GM18951 (cell line): ENCODE measurements at regions of chr1 and their contacts with region 1.

Region 1: GRCh38 chr1:212089560-212090163 is 54.1 kb downstream of the DTL start:
- POLR2A ChIP-seq: no peak

Region 2: GRCh38 chr1:212455803-212456528 is 366.3 kb after region 1 on chr1:
- in situ Hi-C with region 1: loop called (anchors 10 kb)
- POLR2A ChIP-seq: no peak